ENCODE measurements at regions of chr5 and their contacts with region 1.

Region 1: DNA sequence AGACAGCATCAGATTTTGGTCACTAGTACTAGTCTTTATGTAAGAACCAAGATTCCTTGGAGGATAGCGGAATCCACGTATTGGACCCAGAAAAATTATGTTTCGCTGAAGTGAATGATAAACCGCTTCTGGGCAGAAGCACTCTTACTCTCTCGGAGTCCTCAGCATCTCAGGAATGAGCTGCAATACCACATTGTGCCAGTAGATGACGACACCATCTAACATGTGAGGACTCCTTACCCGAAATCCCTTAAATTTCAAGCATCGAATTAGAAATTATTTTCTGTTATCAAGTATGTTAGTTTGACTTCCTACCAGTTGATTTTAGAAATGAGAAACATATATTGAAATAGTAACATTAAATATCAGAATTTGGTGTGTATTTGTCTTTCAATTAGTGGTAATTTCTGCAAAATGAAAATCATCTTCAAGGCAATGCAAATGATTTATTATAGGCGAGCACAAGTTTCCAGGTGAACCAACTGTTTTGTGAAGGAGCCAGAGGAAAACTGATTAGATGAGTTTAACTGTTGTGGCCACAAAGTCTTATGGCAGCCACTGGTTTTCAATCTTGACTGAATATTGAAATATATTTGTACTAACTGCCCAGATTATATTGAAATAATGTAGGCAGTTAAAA is 66.0 kb upstream of the CAMK4 start:
- DNase-seq: peak; percentile 62
- H3K4me3 Mint-ChIP-seq: no peak overlapping the region
- H3K27ac Mint-ChIP-seq: no peak overlapping the region
- H3K4me1 Mint-ChIP-seq: peaks cover 4% of the 10 kb centered on the region
- H3K27me3 Mint-ChIP-seq: no peaks in the 10 kb centered on the region

Region 2: GRCh38 chr5:111107371-111107770 is 50.9 kb before region 1 on chr5:
- intact Hi-C with region 1: no loop called
- DNase-seq: no peak
- H3K4me3 Mint-ChIP-seq: no peak overlapping the region
- H3K27ac Mint-ChIP-seq: no peak overlapping the region
- H3K4me1 Mint-ChIP-seq: no peaks in the 10 kb centered on the region
- H3K27me3 Mint-ChIP-seq: no peaks in the 10 kb centered on the region

Region 3: GRCh38 chr5:111278845-111279504 is 120.8 kb after region 1 on chr5:
- intact Hi-C with region 1: loop called (anchors 1 kb)
- DNase-seq: peak; percentile 75
- H3K4me3 Mint-ChIP-seq: no peak overlapping the region
- H3K27ac Mint-ChIP-seq: no peak overlapping the region
- H3K4me1 Mint-ChIP-seq: peaks cover 27% of the 10 kb centered on the region
- H3K27me3 Mint-ChIP-seq: no peaks in the 10 kb centered on the region

Region 4: GRCh38 chr5:111461255-111461671 is 303.0 kb after region 1 on chr5:
- intact Hi-C with region 1: loop called (anchors 5 kb)
- DNase-seq: no peak
- H3K4me3 Mint-ChIP-seq: no peak overlapping the region
- H3K27ac Mint-ChIP-seq: no peak overlapping the region
- H3K4me1 Mint-ChIP-seq: peaks cover 8% of the 10 kb centered on the region
- H3K27me3 Mint-ChIP-seq: no peaks in the 10 kb centered on the region